Caco-2 (cell line): ENCODE measurements at regions of chr2 and their contacts with region 1.

Region 1: GRCh38 chr2:26942543-26943295 is 27.7 kb upstream of the MAPRE3 start:
- DNase-seq: peak; percentile 68 to 80
- H3K4me3 ChIP-seq: no peak overlapping the region
- H3K4me3 Mint-ChIP-seq: no peak overlapping the region
- H3K27ac Mint-ChIP-seq: no peak overlapping the region
- H3K4me1 ChIP-seq: no peaks in the 10 kb centered on the region
- H3K4me1 Mint-ChIP-seq: peaks cover 6% of the 10 kb centered on the region
- H3K27me3 ChIP-seq: no peaks in the 10 kb centered on the region
- H3K27me3 Mint-ChIP-seq: peaks cover 12% of the 10 kb centered on the region
- CTCF ChIP-seq: peak; percentile 87 to 93

Region 2: DNA sequence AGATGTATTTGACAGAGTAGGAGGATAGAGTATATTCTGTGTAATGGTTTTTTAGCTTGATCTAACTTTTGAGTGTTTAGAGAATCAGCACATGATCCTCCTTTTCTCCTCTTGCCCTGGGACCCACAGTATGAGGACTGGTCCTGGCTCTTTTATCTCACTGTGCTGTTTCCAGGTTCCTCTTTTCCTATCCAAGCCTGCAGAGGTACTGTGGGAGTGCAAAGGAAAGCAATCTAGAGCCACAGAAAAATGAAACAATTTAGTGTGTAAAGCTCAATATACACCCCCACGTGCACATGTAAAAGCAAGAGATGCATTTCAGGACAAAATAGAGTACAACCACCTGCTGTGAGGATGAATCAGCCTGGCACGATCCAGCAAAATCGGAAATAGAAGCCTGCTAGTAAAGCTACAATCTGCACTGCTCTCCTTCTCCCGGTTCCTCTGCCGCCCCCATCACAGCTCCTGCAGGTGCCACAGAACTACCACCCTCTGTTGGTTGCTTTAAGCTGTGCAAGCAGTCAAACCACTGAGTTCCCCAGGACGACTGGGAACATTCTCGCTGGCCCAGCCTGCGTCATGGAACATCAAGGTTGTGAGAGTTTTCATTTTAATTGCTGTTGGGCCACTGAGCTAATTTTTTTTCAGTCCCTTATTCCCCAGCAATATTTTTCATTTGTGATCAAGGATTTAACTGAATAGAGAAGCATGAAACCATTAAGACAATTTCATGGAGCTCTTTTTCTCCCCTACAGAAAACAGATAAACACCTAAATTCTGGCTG is 20.1 kb before region 1 on chr2:
- CTCF ChIA-PET with region 1: interaction called, 12 read pairs
- POLR2A ChIA-PET with region 1: no interaction called
- intact Hi-C with region 1: loop called (anchors 1 kb)
- DNase-seq: peak; percentile 63 to 66
- H3K4me3 ChIP-seq: no peak overlapping the region
- H3K4me3 Mint-ChIP-seq: no peak overlapping the region
- H3K27ac Mint-ChIP-seq: no peak overlapping the region
- H3K4me1 ChIP-seq: peaks cover 22% of the 10 kb centered on the region
- H3K4me1 Mint-ChIP-seq: peaks cover 25% of the 10 kb centered on the region
- H3K27me3 ChIP-seq: no peaks in the 10 kb centered on the region
- H3K27me3 Mint-ChIP-seq: no peaks in the 10 kb centered on the region
- CTCF ChIP-seq: peak; percentile 68 to 85

Region 3: DNA sequence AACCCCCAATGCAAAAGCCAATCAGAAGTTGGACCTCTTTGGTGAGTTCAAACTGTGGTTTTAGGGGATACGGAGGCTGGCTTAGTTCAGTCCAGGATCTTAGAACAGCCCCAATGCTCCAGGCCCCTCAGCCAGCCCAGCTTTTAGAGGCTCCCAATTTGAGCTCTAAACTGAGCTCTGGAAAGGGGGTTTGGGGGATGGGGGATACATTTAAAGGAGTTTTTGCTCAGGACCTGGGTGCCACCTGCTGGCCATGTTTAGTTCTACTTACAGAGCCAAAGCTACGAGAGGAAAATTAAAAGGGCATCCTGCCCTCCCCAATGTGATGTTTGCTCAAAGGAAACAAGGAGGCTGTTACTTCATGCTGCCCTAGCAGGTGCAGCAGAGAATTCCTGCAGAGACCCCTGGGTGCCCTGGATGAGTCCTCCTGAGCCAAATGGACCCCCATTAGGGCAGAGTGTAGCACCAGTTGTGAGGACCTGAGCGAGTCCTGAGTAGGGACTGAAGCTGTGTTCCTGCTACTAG is 74.1 kb after region 1 on chr2:
- CTCF ChIA-PET with region 1: interaction called, 13 read pairs
- POLR2A ChIA-PET with region 1: no interaction called
- intact Hi-C with region 1: no loop called
- DNase-seq: peak; percentile 72 to 73
- H3K4me3 ChIP-seq: no peak overlapping the region
- H3K4me3 Mint-ChIP-seq: no peak overlapping the region
- H3K27ac Mint-ChIP-seq: no peak overlapping the region
- H3K4me1 ChIP-seq: peaks cover 31% of the 10 kb centered on the region
- H3K4me1 Mint-ChIP-seq: peaks cover 23% of the 10 kb centered on the region
- H3K27me3 ChIP-seq: no peaks in the 10 kb centered on the region
- H3K27me3 Mint-ChIP-seq: no peaks in the 10 kb centered on the region
- CTCF ChIP-seq: peak; percentile 64 to 85

Region 4: GRCh38 chr2:27123302-27124231 is 180.8 kb after region 1 on chr2 and contains the start of gene ABHD1:
- CTCF ChIA-PET with region 1: no interaction called
- POLR2A ChIA-PET with region 1: no interaction called
- intact Hi-C with region 1: no loop called
- DNase-seq: peak; percentile 57 to 73
- H3K4me3 ChIP-seq: peak within 1 kb of the TSS; percentile 64
- H3K4me3 Mint-ChIP-seq: peak within 1 kb of the TSS; percentile 81
- H3K27ac Mint-ChIP-seq: no peak within 1 kb of the TSS
- H3K4me1 ChIP-seq: peaks cover 16% of the 10 kb centered on the region
- H3K4me1 Mint-ChIP-seq: peaks cover 9% of the 10 kb centered on the region
- H3K27me3 ChIP-seq: no peaks in the 10 kb centered on the region
- H3K27me3 Mint-ChIP-seq: peaks cover 13% of the 10 kb centered on the region
- CTCF ChIP-seq: no peak
- total RNA-seq, gene ABHD1: 0.18 and 0.23 TPM in 2 replicates

Region 5: DNA sequence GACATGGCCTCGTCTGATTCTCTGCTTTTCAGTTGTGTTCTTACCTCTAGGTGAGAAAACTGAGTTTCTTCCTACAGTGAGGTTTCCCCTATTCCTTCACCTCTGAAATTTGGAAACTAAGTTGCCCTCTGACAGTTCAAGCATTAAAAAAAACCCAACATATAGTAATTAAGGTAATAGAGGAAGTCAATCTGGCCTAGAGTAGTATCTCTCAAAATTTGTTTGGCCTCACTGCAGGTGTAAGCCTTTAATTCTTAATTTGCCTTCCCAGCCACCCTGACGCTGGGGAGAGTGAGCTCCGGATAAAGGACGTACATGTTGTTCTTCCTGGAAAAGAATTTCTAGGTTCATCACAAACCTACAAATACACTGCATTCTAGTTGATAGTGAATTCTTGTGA is 275.9 kb after region 1 on chr2:
- CTCF ChIA-PET with region 1: no interaction called
- POLR2A ChIA-PET with region 1: no interaction called
- intact Hi-C with region 1: no loop called
- DNase-seq: no peak
- H3K4me3 ChIP-seq: peak overlapping the region; percentile 88; the same call in 1 of the 2 replicates
- H3K4me3 Mint-ChIP-seq: peak overlapping the region; percentile 98
- H3K27ac Mint-ChIP-seq: no peak overlapping the region
- H3K4me1 ChIP-seq: peaks cover 19% of the 10 kb centered on the region
- H3K4me1 Mint-ChIP-seq: peaks cover 20% of the 10 kb centered on the region
- H3K27me3 ChIP-seq: no peaks in the 10 kb centered on the region
- H3K27me3 Mint-ChIP-seq: no peaks in the 10 kb centered on the region
- CTCF ChIP-seq: no peak

Region 6: DNA sequence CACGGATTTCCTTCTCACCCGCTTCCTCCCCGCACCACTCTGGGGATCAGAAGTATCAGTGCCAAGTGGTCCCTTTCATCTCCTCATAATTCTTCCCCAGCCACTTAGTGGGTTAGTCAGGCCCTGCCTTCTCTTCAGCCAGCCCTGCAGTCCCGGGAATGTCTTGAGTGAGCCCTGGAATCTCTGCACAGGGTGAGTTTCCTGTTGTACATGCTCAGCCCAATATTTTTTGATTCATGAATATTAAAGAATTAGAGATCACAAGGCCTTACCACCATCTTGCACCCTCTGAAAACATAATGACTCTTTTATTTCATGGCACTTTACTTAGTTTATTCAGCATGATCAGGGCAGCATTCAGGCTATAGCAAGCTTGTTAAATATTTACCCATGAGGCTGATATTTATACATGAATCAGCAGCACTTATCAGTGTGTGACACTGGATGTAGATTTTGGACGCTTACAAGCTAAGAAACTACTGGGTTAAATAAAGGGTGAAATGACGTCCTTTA is 1290.5 kb after region 1 on chr2:
- CTCF ChIA-PET with region 1: no interaction called
- POLR2A ChIA-PET with region 1: no interaction called
- intact Hi-C with region 1: no loop called
- DNase-seq: peak in 1 of 2 experiments; percentile 19
- H3K4me3 ChIP-seq: no peak overlapping the region
- H3K4me3 Mint-ChIP-seq: no peak overlapping the region
- H3K27ac Mint-ChIP-seq: peak overlapping the region; percentile 59
- H3K4me1 ChIP-seq: peaks cover 24% of the 10 kb centered on the region
- H3K4me1 Mint-ChIP-seq: peaks cover 21% of the 10 kb centered on the region
- H3K27me3 ChIP-seq: no peaks in the 10 kb centered on the region
- H3K27me3 Mint-ChIP-seq: no peaks in the 10 kb centered on the region
- CTCF ChIP-seq: no peak